ENCODE measurements at regions of chr16 and their contacts with region 1.

Region 1: GRCh38 chr16:77276661-77277060 is 77.5 kb downstream of the SYCE1L start:
- DNase-seq: no peak
- H3K4me3 ChIP-seq: no peak overlapping the region
- H3K27ac ChIP-seq: no peak overlapping the region
- H3K4me1 ChIP-seq: no peaks in the 10 kb centered on the region
- H3K27me3 ChIP-seq: no peaks in the 10 kb centered on the region
- CTCF ChIP-seq: no peak
- EP300 ChIP-seq: no peak
- POLR2A ChIP-seq: no peak

Region 2: GRCh38 chr16:77308163-77308561 is 31.5 kb after region 1 on chr16:
- intact Hi-C with region 1: loop called in 1 of 4 experiments (anchors 1 kb)
- DNase-seq: no peak
- H3K4me3 ChIP-seq: no peak overlapping the region
- H3K27ac ChIP-seq: no peak overlapping the region
- H3K4me1 ChIP-seq: no peaks in the 10 kb centered on the region
- H3K27me3 ChIP-seq: no peaks in the 10 kb centered on the region
- CTCF ChIP-seq: no peak
- EP300 ChIP-seq: no peak
- POLR2A ChIP-seq: no peak

Region 3: GRCh38 chr16:78396046-78396445 is 1119.4 kb after region 1 on chr16:
- intact Hi-C with region 1: no loop called
- DNase-seq: no peak
- H3K4me3 ChIP-seq: no peak overlapping the region
- H3K27ac ChIP-seq: no peak overlapping the region
- H3K4me1 ChIP-seq: peaks cover 2% of the 10 kb centered on the region
- H3K27me3 ChIP-seq: no peaks in the 10 kb centered on the region
- CTCF ChIP-seq: no peak
- EP300 ChIP-seq: no peak
- POLR2A ChIP-seq: no peak

Measured in ovary (tissue), 10 donors.